Activated B cell treated with CpG ODN at 0.5 μM for 24 hours (primary cell): ENCODE measurements at regions of chr1 and their contacts with region 1.

Region 1: DNA sequence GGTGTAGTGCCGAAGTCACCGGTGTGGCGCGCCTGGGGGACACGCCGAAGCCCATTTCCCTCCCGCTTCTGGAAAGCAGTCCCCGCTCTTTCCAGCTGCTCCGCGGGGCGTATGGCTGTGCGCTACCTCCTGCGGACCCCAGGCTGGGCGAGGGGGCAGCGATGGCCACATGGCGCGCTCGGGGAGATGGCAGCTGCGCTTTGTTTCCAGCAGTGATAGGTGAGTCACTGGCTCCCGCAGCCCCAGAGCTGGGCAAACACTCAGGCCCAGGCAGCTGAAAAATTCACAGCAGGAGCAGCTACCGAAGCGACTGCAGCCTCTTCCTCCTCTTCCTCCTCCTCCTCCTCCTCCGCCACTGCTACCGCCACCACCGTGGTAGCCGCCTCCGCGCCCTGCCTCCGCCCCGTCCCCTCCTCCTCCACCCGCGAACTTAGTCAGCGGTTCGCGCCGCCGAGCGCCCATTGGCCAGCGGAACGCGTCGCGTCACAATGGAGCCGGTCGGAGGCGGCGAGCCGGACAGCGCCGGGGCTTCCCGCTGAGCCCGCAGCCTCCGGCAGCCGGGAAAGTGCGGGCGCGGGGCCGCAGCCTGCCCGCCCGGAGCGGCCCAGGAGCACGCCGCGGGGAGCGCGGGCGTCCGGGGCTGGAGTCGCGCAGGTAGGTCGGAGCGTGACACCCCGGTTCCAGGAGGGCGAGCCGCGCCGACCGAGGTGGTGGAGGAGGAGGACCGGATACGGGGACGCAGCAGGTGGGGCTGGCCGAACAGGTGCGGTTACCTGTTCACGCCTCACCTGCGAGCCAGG is at the start of gene LRRC8B:
- DNase-seq: peak; percentile 85
- ATAC-seq: peak; percentile 84
- H3K4me3 Mint-ChIP-seq: peak within 1 kb of the TSS; percentile 92
- H3K27ac Mint-ChIP-seq: peak within 1 kb of the TSS; percentile 91
- H3K4me1 Mint-ChIP-seq: peaks cover 31% of the 10 kb centered on the region
- H3K27me3 Mint-ChIP-seq: no peaks in the 10 kb centered on the region
- CTCF ChIP-seq: no peak
- total RNA-seq, gene LRRC8B: 14.7 and 19.1 TPM in 2 replicates

Region 2: GRCh38 chr1:88891318-88891950 is 633.1 kb before region 1 on chr1 and contains the start of gene GTF2B:
- CTCF ChIA-PET with region 1: no interaction called
- POLR2A ChIA-PET with region 1: no interaction called
- intact Hi-C with region 1: loop called (anchors 1 kb)
- DNase-seq: peak; percentile 90
- ATAC-seq: peak; percentile 91
- H3K4me3 Mint-ChIP-seq: peak within 1 kb of the TSS; percentile 99
- H3K27ac Mint-ChIP-seq: peak within 1 kb of the TSS; percentile 96
- H3K4me1 Mint-ChIP-seq: peaks cover 40% of the 10 kb centered on the region
- H3K27me3 Mint-ChIP-seq: no peaks in the 10 kb centered on the region
- CTCF ChIP-seq: no peak
- total RNA-seq, gene GTF2B: 30.0 and 32.2 TPM in 2 replicates

Region 3: DNA sequence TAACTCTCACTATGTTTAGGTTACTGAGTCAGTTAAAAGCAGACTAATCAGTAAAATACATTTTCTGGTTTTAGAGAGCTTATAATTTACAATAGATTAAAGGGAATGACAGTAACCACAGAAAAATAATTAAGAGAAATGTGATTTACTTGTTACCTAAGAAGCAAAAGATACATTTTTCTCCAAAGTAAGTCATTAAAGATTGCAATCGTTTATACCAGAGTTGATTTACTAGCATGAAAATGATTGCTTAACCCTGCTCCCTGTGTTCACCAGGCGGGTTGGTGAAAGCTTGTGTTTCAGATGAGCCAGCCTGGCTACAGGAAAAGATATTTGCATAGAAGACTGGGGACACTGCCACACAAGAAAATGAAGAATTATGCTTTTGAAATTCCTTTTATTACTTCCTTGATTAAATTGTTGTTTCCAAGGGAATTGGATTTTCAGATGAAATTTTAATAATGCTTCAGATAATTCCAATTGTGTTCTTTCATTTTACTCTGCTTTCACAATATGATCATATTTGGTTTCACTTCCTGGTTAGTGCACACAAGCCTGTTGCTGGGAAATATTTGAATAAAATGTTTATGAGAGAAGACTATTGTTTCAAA is 28.0 kb after region 1 on chr1:
- CTCF ChIA-PET with region 1: no interaction called
- POLR2A ChIA-PET with region 1: interaction called, 5 read pairs
- intact Hi-C with region 1: loop called (anchors 1 kb)
- DNase-seq: no peak
- ATAC-seq: peak; percentile 79
- H3K4me3 Mint-ChIP-seq: peak overlapping the region; percentile 79
- H3K27ac Mint-ChIP-seq: peak overlapping the region; percentile 87
- H3K4me1 Mint-ChIP-seq: peaks cover 46% of the 10 kb centered on the region
- H3K27me3 Mint-ChIP-seq: no peaks in the 10 kb centered on the region
- CTCF ChIP-seq: no peak

Region 4: GRCh38 chr1:89598450-89599331 is 74.1 kb after region 1 on chr1:
- CTCF ChIA-PET with region 1: interaction called, 12 read pairs
- POLR2A ChIA-PET with region 1: no interaction called
- intact Hi-C with region 1: loop called (anchors 1 kb)
- DNase-seq: no peak
- ATAC-seq: peak; percentile 62
- H3K4me3 Mint-ChIP-seq: no peak overlapping the region
- H3K27ac Mint-ChIP-seq: no peak overlapping the region
- H3K4me1 Mint-ChIP-seq: peaks cover 4% of the 10 kb centered on the region
- H3K27me3 Mint-ChIP-seq: no peaks in the 10 kb centered on the region
- CTCF ChIP-seq: peak; percentile 24

Region 5: GRCh38 chr1:89670163-89670562 is 145.6 kb after region 1 on chr1:
- CTCF ChIA-PET with region 1: no interaction called
- POLR2A ChIA-PET with region 1: no interaction called
- intact Hi-C with region 1: loop called (anchors 1 kb)
- DNase-seq: no peak
- ATAC-seq: peak; percentile 90
- H3K4me3 Mint-ChIP-seq: peak overlapping the region; percentile 16
- H3K27ac Mint-ChIP-seq: peak overlapping the region; percentile 69
- H3K4me1 Mint-ChIP-seq: peaks cover 45% of the 10 kb centered on the region
- H3K27me3 Mint-ChIP-seq: no peaks in the 10 kb centered on the region
- CTCF ChIP-seq: no peak

Region 6: DNA sequence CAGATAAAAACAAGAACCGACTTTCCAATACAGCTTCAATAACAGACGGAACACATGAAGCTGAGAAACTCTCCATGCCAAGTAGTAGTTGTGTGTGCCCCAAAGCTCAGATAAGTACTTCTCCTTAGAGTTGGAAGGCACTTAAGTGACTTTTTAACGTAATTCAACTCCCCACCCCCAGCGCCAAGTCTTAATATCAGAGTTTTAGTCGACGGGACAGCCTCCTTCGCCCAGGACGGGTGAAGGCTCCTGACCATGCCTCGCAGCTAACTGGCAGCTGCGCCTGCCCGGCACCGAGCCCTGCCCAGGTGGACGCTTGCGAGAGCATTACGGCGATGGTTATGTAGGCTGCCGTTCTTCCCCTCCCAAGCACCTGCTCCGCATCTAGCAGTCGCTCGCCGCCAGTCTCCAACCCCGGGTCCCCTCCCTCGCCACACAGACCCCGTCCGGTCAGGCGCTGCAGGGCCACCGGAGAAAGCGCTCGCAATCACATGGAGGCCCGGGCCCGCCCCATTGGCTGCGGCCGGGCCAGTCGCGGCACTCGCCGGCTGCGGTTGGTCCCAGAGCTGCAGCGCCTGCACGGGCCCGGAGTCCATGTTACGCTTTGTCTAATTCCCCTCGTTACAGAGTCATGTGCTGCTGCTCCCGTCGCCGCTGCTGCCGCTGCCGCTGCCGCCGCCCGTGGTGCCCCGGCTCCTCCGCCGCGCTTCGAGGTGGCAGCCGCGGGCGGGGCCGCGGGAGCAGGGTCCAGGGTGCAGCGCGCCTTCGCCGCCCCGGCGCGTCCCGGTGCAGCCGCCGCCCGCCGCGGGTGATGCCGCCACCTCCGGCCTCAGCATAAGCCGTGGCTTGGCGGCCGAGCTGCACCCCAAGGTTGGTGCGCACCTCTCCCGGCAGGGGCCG is 296.1 kb after region 1 on chr1 and contains the start of gene LRRC8D:
- CTCF ChIA-PET with region 1: no interaction called
- POLR2A ChIA-PET with region 1: interaction called, 6 read pairs
- intact Hi-C with region 1: loop called (anchors 1 kb)
- DNase-seq: peak; percentile 67
- ATAC-seq: peak; percentile 66
- H3K4me3 Mint-ChIP-seq: peak within 1 kb of the TSS; percentile 95
- H3K27ac Mint-ChIP-seq: peak within 1 kb of the TSS; percentile 96
- H3K4me1 Mint-ChIP-seq: peaks cover 48% of the 10 kb centered on the region
- H3K27me3 Mint-ChIP-seq: no peaks in the 10 kb centered on the region
- CTCF ChIP-seq: no peak
- total RNA-seq, gene LRRC8D: 31.3 and 36.0 TPM in 2 replicates

Region 7: GRCh38 chr1:89994805-89995597 is 470.4 kb after region 1 on chr1 and contains the start of gene ZNF326:
- CTCF ChIA-PET with region 1: no interaction called
- POLR2A ChIA-PET with region 1: no interaction called
- intact Hi-C with region 1: loop called (anchors 1 kb)
- DNase-seq: peak; percentile 98
- ATAC-seq: peak; percentile 97
- H3K4me3 Mint-ChIP-seq: peak within 1 kb of the TSS; percentile 94
- H3K27ac Mint-ChIP-seq: peak within 1 kb of the TSS; percentile 88
- H3K4me1 Mint-ChIP-seq: peaks cover 32% of the 10 kb centered on the region
- H3K27me3 Mint-ChIP-seq: no peaks in the 10 kb centered on the region
- CTCF ChIP-seq: no peak
- total RNA-seq, gene ZNF326: 26.2 and 30.3 TPM in 2 replicates